HCT116 (cell line): ENCODE measurements at regions of chr7 and their contacts with region 1.

Region 1: DNA sequence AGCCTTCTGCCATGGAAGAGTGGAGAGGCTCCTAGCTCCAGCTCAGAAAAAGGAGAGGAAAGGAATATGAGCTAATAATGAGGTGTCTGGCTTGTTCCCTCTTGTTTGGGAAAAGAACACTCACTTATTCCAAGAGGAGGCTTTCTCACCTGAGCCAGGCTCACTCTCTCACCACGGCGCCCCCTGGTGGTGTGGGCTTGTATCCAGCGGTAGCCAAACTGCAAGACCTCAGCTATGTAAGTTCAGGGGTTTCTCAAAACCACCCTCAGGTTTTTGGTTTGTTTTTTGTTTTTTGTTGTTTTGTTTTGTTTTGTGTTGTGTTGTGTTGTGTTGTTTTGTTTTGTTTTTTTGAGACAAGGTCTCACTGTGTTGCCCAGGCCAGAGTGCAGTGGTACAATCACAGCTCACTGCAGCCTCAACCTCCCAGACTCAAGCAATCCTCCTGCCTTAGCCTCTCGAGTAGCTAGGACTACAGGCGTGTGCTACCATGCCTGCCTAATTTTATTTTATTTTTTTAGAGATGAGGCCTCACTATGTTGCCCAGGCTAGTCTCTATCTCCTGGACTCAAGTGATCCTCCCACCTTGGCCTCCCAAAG is 124.0 kb downstream of the TMEM130 start:
- DNase-seq: peak; percentile 57
- ATAC-seq: peak; percentile 96
- H3K4me3 ChIP-seq: no peak overlapping the region
- H3K27ac ChIP-seq: no peak overlapping the region
- H3K4me1 ChIP-seq: no peaks in the 10 kb centered on the region
- H3K27me3 ChIP-seq: no peaks in the 10 kb centered on the region
- CTCF ChIP-seq: peak; percentile 79 to 97 (median 93)
- POLR2A ChIP-seq: no peak
- RAD21 ChIP-seq: peak; percentile 78

Region 2: GRCh38 chr7:98294796-98295382 is 450.9 kb before region 1 on chr7:
- CTCF ChIA-PET with region 1: interaction called, 3 read pairs
- POLR2A ChIA-PET with region 1: no interaction called
- RAD21 ChIA-PET with region 1: no interaction called
- intact Hi-C with region 1: loop called (anchors 2 kb)
- DNase-seq: peak; percentile 41
- ATAC-seq: peak; percentile 93
- H3K4me3 ChIP-seq: no peak overlapping the region
- H3K27ac ChIP-seq: peak overlapping the region; percentile 21; the same call in 1 of the 2 replicates
- H3K4me1 ChIP-seq: peaks cover 0 to 13% of the 10 kb centered on the region in 2 experiments; a peak in 2 of 4 replicates
- H3K27me3 ChIP-seq: no peaks in the 10 kb centered on the region
- CTCF ChIP-seq: peak; percentile 79 to 86 (median 82); a peak in 5 of 6 replicates
- POLR2A ChIP-seq: no peak
- RAD21 ChIP-seq: peak; percentile 98

Region 3: DNA sequence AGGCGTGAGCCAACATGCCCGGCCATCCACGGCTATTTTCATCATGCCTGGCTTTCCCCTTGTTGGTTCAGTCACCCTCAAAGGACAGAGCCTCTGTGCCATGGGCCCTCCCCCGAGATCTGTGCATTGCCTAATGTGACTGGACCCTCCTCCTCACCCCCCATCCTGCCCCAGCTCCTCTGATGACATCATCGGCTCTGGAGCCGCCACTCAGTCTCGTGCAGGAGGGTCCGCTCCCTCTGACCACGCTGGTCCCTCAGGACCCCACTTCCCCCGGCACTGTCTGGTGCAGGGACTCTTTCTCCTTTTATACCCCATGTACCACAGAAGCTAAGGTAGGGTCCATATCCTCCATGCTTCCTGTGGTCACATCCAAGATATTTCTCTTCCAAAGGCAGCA is 311.7 kb before region 1 on chr7:
- CTCF ChIA-PET with region 1: interaction called, 17 read pairs
- POLR2A ChIA-PET with region 1: no interaction called
- RAD21 ChIA-PET with region 1: no interaction called
- intact Hi-C with region 1: loop called (anchors 1 kb)
- DNase-seq: no peak
- ATAC-seq: no peak
- H3K4me3 ChIP-seq: no peak overlapping the region
- H3K27ac ChIP-seq: no peak overlapping the region
- H3K4me1 ChIP-seq: no peaks in the 10 kb centered on the region
- H3K27me3 ChIP-seq: no peaks in the 10 kb centered on the region
- CTCF ChIP-seq: no peak
- POLR2A ChIP-seq: no peak
- RAD21 ChIP-seq: no peak

Region 4: GRCh38 chr7:98733036-98733435 is 12.8 kb before region 1 on chr7:
- CTCF ChIA-PET with region 1: interaction called, 16 read pairs
- POLR2A ChIA-PET with region 1: no interaction called
- RAD21 ChIA-PET with region 1: interaction called in 1 of 2 experiments, 4 read pairs
- intact Hi-C with region 1: no loop called
- DNase-seq: peak; percentile 85
- ATAC-seq: peak; percentile 97
- H3K4me3 ChIP-seq: no peak overlapping the region
- H3K27ac ChIP-seq: no peak overlapping the region
- H3K4me1 ChIP-seq: no peaks in the 10 kb centered on the region
- H3K27me3 ChIP-seq: no peaks in the 10 kb centered on the region
- CTCF ChIP-seq: peak; percentile 57 to 90 (median 90)
- POLR2A ChIP-seq: no peak
- RAD21 ChIP-seq: peak; percentile 59